ENCODE measurements at regions of chr17 and their contacts with region 1.

Region 1: GRCh38 chr17:34156741-34157589 is 98.1 kb upstream of the CCL2 start:
- DNase-seq: no peak
- H3K4me3 ChIP-seq: peak overlapping the region in 2 of 3 donors; percentile 16 to 48
- H3K27ac ChIP-seq: no peak overlapping the region
- H3K4me1 ChIP-seq: no peaks in the 10 kb centered on the region
- H3K27me3 ChIP-seq: peaks cover 0 to 72% of the 10 kb centered on the region in 2 donors
- CTCF ChIP-seq: no peak
- POLR2A ChIP-seq: no peak

Region 2: GRCh38 chr17:34082404-34082803 is 74.6 kb before region 1 on chr17:
- intact Hi-C with region 1: no loop called
- DNase-seq: no peak
- H3K4me3 ChIP-seq: no peak overlapping the region
- H3K27ac ChIP-seq: no peak overlapping the region
- H3K4me1 ChIP-seq: no peaks in the 10 kb centered on the region
- H3K27me3 ChIP-seq: peaks cover 0 to 16% of the 10 kb centered on the region in 2 donors
- CTCF ChIP-seq: no peak
- POLR2A ChIP-seq: no peak

Region 3: DNA sequence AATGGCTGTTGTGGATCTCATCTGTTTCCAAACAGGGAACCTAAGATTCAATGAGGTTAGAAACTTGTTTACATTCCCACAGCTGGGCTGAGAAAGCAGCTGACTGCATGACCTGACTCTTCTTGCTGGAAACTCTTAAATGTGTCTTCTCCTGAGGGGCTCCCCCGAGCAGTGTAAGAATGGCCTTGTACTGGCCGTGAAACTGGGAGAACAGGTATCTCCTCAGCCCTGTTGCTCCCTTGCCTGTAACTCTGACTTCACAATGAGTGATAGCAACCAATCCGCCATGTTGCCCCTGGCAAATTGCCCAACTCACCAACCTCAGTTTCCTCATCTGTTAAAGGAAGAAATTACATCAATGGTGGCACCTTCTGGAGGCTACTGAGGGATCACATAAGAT is 39.0 kb after region 1 on chr17:
- intact Hi-C with region 1: no loop called
- DNase-seq: no peak
- H3K4me3 ChIP-seq: no peak overlapping the region
- H3K27ac ChIP-seq: no peak overlapping the region
- H3K4me1 ChIP-seq: no peaks in the 10 kb centered on the region
- H3K27me3 ChIP-seq: peaks cover 0 to 3% of the 10 kb centered on the region in 2 donors
- CTCF ChIP-seq: no peak
- POLR2A ChIP-seq: no peak

Region 4: DNA sequence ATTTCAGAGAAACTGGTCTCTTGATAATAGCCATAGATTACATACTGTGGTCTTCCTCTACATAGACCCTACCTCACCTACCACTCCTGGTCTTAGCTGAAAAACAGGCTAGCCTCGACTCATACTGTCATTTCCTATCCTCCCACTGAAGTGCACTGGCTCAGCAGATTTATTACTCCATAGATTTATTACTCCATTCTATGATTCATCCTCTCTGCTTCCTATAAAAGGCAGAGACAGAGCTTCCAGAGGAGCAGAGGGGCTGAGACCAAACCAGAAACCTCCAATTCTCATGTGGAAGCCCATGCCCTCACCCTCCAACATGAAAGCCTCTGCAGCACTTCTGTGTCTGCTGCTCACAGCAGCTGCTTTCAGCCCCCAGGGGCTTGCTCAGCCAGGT is 113.0 kb after region 1 on chr17 and contains the start of gene CCL7:
- intact Hi-C with region 1: loop called (anchors 5 kb)
- DNase-seq: no peak
- H3K4me3 ChIP-seq: no peak within 1 kb of the TSS
- H3K27ac ChIP-seq: no peak within 1 kb of the TSS
- H3K4me1 ChIP-seq: no peaks in the 10 kb centered on the region
- H3K27me3 ChIP-seq: no peaks in the 10 kb centered on the region
- CTCF ChIP-seq: no peak
- POLR2A ChIP-seq: no peak
- total RNA-seq, gene CCL7: not detected

Region 5: GRCh38 chr17:34283571-34283970 is 126.6 kb after region 1 on chr17:
- intact Hi-C with region 1: no loop called
- DNase-seq: no peak
- H3K4me3 ChIP-seq: no peak overlapping the region
- H3K27ac ChIP-seq: no peak overlapping the region
- H3K4me1 ChIP-seq: no peaks in the 10 kb centered on the region
- H3K27me3 ChIP-seq: no peaks in the 10 kb centered on the region
- CTCF ChIP-seq: no peak
- POLR2A ChIP-seq: no peak

Region 6: GRCh38 chr17:34386697-34387550 is 230.0 kb after region 1 on chr17:
- intact Hi-C with region 1: no loop called
- DNase-seq: no peak
- H3K4me3 ChIP-seq: no peak overlapping the region
- H3K27ac ChIP-seq: no peak overlapping the region
- H3K4me1 ChIP-seq: no peaks in the 10 kb centered on the region
- H3K27me3 ChIP-seq: no peaks in the 10 kb centered on the region
- CTCF ChIP-seq: no peak
- POLR2A ChIP-seq: no peak

Region 7: DNA sequence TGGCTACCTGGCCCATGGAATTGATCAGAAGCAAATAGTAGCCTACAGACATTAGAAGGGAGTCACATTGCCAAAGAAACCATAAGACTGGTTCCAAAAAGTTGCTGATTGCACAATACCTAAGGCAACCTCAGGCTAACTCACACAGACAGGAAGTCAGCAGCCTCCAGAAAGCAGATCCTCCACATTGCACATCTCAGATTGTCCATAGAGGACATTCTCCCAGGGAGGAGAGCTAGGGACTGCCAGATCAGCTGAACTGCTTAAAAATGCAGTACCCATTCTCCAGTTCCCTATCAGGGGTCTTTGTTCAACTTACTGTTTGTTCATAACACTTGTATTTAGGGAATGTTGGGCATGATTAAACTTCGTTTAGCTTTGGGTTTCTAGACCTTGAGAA is 1928.8 kb after region 1 on chr17:
- intact Hi-C with region 1: loop called (anchors 5 kb)
- DNase-seq: no peak
- H3K4me3 ChIP-seq: no peak overlapping the region
- H3K27ac ChIP-seq: no peak overlapping the region
- H3K4me1 ChIP-seq: no peaks in the 10 kb centered on the region
- H3K27me3 ChIP-seq: no peaks in the 10 kb centered on the region
- CTCF ChIP-seq: no peak
- POLR2A ChIP-seq: no peak